Activated CD4-positive, alpha-beta T cell treated with anti-CD3 and anti-CD28 coated beads for 36 hours (primary cell): ENCODE measurements at regions of chr20 and their contacts with region 1.

Region 1: GRCh38 chr20:50509935-50510705 is at the start of gene PTPN1:
- DNase-seq: peak; percentile 99
- ATAC-seq: peak; percentile 93
- H3K4me3 Mint-ChIP-seq: peak within 1 kb of the TSS; percentile 99
- H3K27ac Mint-ChIP-seq: peak within 1 kb of the TSS; percentile 92
- H3K4me1 Mint-ChIP-seq: peaks cover 47% of the 10 kb centered on the region
- H3K27me3 Mint-ChIP-seq: no peaks in the 10 kb centered on the region
- total RNA-seq, gene PTPN1: 79.0 to 92.8 TPM

Region 2: DNA sequence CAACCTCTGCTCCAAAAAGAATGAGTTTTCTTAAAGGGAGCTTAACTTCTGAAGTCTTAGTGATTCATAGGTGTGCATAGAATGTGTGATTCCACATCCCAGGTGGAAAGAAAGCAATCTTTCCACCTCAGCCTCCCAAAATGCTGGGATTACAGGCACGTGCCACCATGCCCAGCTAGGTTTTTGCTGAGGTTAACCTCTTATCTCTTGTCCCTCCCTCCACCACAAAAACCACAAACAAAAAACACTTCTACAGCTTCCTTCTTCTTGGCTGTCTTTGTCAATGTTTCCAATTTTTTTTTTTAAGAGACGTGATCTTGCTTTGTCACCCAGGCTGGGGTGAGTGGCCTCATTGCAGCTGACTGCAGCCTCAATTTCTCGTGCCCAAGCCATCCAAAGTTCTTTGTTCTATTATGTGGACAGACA is 1472.1 kb before region 1 on chr20:
- CTCF ChIA-PET with region 1: no interaction called
- POLR2A ChIA-PET with region 1: no interaction called
- intact Hi-C with region 1: no loop called
- DNase-seq: peak; percentile 45
- ATAC-seq: peak; percentile 80
- H3K4me3 Mint-ChIP-seq: peak overlapping the region; percentile 20
- H3K27ac Mint-ChIP-seq: peak overlapping the region; percentile 44
- H3K4me1 Mint-ChIP-seq: peaks cover 18% of the 10 kb centered on the region
- H3K27me3 Mint-ChIP-seq: no peaks in the 10 kb centered on the region

Region 3: DNA sequence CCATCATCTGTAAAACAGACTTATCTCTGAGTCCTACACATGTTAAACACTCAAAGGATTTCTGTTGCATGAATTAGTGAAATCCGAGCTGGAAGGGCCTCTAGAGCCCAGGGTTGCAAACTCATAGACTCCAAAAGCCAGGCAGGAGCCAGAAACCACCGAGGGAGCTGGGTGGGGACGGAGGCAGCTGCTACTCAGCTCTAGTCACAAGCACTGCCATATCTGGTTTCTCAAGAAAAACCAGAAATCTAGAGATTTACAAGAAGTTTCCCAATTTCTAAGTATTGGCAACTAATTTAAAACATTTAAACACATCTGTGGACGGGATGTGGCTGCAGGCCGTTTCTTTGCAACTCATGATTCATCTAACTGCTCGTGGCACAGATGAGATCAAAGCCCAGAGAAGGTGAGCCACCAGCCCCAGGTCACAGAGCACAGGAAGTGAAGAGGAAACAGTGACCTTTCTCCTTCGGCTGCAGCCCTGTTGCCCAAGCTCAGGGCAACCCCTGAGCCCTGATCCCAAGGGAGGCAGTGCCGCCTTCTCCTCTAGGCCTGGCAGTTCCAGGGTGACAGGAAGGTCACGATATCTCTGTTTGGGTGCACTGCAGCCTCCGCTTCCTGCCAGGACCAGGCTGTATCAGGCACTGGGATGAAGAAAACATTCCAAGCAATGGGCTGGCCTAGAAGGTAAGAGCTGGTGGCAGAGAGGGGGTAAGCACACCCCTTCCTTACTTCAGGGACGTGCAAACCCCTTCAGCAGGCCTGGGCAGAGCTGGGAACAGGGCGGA is 915.8 kb before region 1 on chr20:
- CTCF ChIA-PET with region 1: no interaction called
- POLR2A ChIA-PET with region 1: no interaction called
- intact Hi-C with region 1: loop called in 1 of 2 experiments (anchors 10 kb)
- DNase-seq: peak; percentile 87
- ATAC-seq: peak; percentile 62
- H3K4me3 Mint-ChIP-seq: peak overlapping the region; percentile 76
- H3K27ac Mint-ChIP-seq: peak overlapping the region; percentile 96
- H3K4me1 Mint-ChIP-seq: peaks cover 77% of the 10 kb centered on the region
- H3K27me3 Mint-ChIP-seq: peaks cover 3% of the 10 kb centered on the region

Region 4: DNA sequence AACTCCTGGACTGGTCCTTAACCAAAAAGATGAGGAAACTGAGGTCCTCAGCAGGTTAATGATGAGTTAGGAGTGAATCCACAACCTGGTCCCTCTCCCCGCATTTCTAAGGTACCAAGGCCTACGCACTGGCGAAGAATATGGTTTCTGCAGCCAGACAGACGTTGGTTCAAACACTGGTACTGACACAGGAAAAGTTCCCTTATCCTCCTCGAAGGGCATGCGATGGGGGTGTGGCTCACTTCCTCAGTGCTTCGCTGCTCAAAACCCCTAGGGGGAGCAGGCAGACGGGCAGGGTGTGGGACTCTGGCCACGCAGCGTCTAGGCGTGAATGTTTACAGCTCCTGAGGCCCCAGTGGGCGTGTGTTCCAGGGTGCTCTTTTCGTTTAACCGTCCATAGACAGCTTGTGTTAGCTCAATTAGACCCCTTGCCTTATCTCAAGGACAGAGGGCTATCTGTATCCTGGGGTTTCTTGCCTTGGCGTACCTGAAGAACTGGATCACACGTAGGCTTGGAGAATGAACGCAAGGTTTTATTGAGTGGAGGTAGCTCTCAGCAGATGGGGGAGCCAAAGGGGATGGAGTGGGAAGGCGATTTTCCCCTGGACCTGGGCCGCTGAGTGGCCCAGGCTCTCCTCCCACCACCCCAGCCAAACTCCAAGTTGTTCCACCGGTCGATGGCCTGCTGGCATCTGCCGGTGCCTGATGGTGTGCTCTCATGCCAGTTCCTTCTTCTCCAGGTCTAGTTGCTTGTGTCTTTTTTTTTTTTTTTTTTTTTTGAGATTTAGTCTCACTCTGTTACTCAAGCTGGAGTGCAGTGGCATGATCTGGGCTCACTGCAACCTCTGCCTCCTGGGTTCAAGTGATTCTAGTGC is 31.7 kb before region 1 on chr20:
- CTCF ChIA-PET with region 1: interaction called, 7 read pairs
- POLR2A ChIA-PET with region 1: interaction called, 3 read pairs
- intact Hi-C with region 1: loop called (anchors 1 to 5 kb)
- DNase-seq: peak; percentile 89
- ATAC-seq: peak; percentile 99
- H3K4me3 Mint-ChIP-seq: no peak overlapping the region
- H3K27ac Mint-ChIP-seq: peak overlapping the region; percentile 13
- H3K4me1 Mint-ChIP-seq: peaks cover 32% of the 10 kb centered on the region
- H3K27me3 Mint-ChIP-seq: no peaks in the 10 kb centered on the region

Region 5: GRCh38 chr20:50523552-50524167 is 13.5 kb after region 1 on chr20:
- CTCF ChIA-PET with region 1: interaction called, 18 read pairs
- POLR2A ChIA-PET with region 1: interaction called, 5 read pairs
- intact Hi-C with region 1: loop called in 1 of 2 experiments (anchors 1 kb)
- DNase-seq: no peak
- ATAC-seq: no peak
- H3K4me3 Mint-ChIP-seq: no peak overlapping the region
- H3K27ac Mint-ChIP-seq: peak overlapping the region; percentile 76
- H3K4me1 Mint-ChIP-seq: peaks cover 50% of the 10 kb centered on the region
- H3K27me3 Mint-ChIP-seq: no peaks in the 10 kb centered on the region

Region 6: DNA sequence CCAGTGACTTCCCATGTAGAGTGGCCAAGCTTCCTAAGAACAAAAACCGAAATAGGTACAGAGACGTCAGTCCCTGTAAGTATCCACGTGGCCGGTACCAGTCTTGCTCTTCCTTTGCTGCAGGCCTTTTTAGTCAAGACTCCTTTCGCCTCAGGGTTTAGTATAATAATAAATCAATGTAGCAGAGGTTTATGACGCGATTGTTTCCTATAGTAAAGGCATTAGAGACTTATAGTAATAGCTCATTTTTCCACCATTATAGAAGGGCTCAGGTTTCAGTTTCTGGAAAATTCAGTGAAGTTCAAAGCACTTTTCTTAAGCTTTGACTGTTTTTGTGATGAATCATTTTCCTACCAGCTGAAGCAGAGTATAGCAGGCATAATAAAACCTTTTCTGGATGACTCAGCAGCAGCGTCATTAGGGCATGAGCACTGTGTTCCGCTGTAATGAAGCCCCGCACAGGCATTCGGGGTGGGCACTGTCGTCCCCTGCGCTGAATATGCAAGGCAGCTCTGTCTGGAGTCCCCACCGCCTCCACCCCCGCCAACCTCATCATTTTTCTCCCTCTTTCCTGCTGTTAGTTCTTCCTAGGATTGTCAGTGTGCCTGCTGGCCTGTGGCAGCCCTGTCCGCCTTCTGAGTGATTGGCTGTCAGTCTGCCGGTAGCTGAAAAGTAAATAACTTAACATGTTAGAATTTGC is 51.4 kb after region 1 on chr20:
- CTCF ChIA-PET with region 1: interaction called, 17 read pairs
- POLR2A ChIA-PET with region 1: interaction called, 29 read pairs
- intact Hi-C with region 1: loop called in 1 of 2 experiments (anchors 1 kb)
- DNase-seq: peak; percentile 85
- ATAC-seq: peak; percentile 84
- H3K4me3 Mint-ChIP-seq: peak overlapping the region; percentile 76
- H3K27ac Mint-ChIP-seq: peak overlapping the region; percentile 99
- H3K4me1 Mint-ChIP-seq: peaks cover 85% of the 10 kb centered on the region
- H3K27me3 Mint-ChIP-seq: no peaks in the 10 kb centered on the region

Region 7: GRCh38 chr20:50575847-50576720 is 66.0 kb after region 1 on chr20:
- CTCF ChIA-PET with region 1: interaction called, 29 read pairs
- POLR2A ChIA-PET with region 1: interaction called, 6 read pairs
- intact Hi-C with region 1: no loop called
- DNase-seq: peak; percentile 83
- ATAC-seq: peak; percentile 89
- H3K4me3 Mint-ChIP-seq: no peak overlapping the region
- H3K27ac Mint-ChIP-seq: peak overlapping the region; percentile 16
- H3K4me1 Mint-ChIP-seq: peaks cover 44% of the 10 kb centered on the region
- H3K27me3 Mint-ChIP-seq: no peaks in the 10 kb centered on the region

Region 8: DNA sequence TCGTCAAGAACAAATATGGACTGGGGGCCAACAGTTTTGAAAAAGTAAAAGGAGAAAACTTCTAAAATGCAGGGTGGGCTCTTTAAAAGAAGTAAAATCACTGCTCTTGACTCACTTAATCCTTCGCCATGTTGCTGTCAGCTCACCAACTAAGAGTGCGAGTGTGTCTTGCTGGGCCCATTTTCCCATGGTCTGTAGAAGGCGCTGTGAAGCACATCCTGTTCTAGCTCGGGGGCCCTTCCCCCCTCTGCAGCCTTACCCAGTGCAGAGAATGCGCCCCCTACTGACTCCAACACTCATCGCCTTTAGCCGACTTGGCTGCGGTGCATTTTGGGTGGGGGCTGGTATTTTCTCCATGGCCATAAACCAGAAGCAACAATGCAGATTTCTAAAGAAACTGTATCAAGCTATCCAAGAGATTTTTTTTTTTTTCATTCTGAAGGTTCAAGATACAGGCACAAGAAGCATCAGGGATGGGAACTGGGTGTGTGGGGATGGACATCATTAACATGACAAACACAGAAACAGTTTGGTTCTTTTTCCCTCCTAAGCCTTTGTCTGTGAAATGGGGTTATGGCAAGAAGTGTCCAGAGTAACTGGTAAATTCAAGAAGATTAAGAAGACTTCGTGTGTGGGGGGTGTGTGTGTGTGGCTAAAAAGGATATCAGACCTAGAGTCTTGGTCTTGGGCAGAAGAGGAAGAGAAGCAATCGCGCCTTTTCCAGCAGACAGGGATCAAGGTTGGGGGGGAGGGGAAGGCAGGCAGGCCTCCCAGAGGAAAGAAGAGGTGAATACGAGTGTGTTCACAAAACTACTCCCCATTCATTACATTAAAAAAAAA is 419.4 kb after region 1 on chr20:
- CTCF ChIA-PET with region 1: no interaction called
- POLR2A ChIA-PET with region 1: no interaction called
- intact Hi-C with region 1: loop called in 1 of 2 experiments (anchors 10 kb)
- DNase-seq: peak; percentile 98
- ATAC-seq: peak; percentile 80
- H3K4me3 Mint-ChIP-seq: peak overlapping the region; percentile 92
- H3K27ac Mint-ChIP-seq: peak overlapping the region; percentile 95
- H3K4me1 Mint-ChIP-seq: peaks cover 55% of the 10 kb centered on the region
- H3K27me3 Mint-ChIP-seq: no peaks in the 10 kb centered on the region